ENCODE measurements at regions of chr15 and their contacts with region 1.

Region 1: DNA sequence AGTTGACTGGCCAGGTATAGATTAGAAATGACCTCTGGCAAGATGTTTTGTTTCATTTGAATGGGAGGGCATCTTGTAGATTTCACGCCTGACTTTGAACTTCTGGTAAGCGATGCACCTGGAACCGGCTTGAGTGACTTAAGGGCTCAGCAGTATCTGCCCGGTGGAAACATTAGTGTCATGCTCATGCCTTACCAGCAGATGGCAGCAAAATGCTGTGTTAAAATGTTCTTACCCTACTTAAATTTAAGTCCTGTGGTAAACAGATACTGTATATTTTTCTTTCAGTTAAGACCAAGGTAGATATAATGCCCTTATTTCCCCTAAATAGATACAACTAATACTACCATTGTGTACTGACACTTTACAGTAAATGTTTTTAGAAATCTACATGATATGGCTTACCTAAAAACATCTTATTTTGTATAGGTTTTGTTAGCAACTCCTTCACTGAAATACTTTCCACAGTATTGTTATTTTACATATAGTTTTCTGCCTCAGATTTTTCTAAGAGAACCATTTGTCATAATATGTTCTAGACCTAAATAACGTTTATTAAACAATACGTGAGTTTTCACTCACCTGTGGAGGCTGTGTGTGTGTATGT is 25.5 kb downstream of the ASB7 start:
- DNase-seq: peak; percentile 43
- ATAC-seq: peak; percentile 92
- H3K4me3 ChIP-seq: no peak overlapping the region
- H3K27ac ChIP-seq: no peak overlapping the region
- H3K4me1 ChIP-seq: no peaks in the 10 kb centered on the region
- H3K27me3 ChIP-seq: no peaks in the 10 kb centered on the region
- CTCF ChIP-seq: peak; percentile 73 to 86 (median 80); a peak in 5 of 6 replicates
- EP300 ChIP-seq: no peak
- POLR2A ChIP-seq: no peak
- RAD21 ChIP-seq: peak; percentile 73

Region 2: DNA sequence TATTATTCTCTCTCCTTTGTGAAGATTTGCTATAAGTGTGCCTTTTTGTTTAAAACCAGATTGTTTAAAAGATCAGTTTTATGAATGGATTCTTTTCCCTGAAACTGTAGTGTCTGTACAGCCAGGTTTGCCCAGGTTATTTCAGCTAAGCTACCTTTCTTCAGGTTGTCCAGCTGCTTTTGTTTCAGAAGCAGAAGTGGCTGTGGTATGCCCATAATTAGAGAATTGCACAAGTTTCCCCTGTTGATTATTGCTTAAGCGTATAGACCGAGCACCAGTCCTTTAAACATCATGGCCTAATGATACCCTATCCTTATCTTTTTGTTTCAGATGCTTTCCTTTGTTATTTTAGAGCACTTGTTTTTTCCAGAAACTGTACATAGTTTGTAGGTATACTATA is 15.4 kb before region 1 on chr15:
- CTCF ChIA-PET with region 1: interaction called, 11 read pairs
- POLR2A ChIA-PET with region 1: interaction called, 8 read pairs
- RAD21 ChIA-PET with region 1: no interaction called
- SMC1A ChIA-PET with region 1: interaction called, 4 read pairs
- in situ Hi-C with region 1: no loop called
- intact Hi-C with region 1: no loop called
- DNase-seq: no peak
- ATAC-seq: no peak
- H3K4me3 ChIP-seq: no peak overlapping the region
- H3K27ac ChIP-seq: no peak overlapping the region
- H3K4me1 ChIP-seq: no peaks in the 10 kb centered on the region
- H3K27me3 ChIP-seq: no peaks in the 10 kb centered on the region
- CTCF ChIP-seq: no peak
- EP300 ChIP-seq: no peak
- POLR2A ChIP-seq: no peak
- RAD21 ChIP-seq: no peak

Region 3: GRCh38 chr15:100771746-100772145 is 143.9 kb after region 1 on chr15:
- CTCF ChIA-PET with region 1: no interaction called
- POLR2A ChIA-PET with region 1: no interaction called
- RAD21 ChIA-PET with region 1: no interaction called
- SMC1A ChIA-PET with region 1: no interaction called
- in situ Hi-C with region 1: no loop called
- intact Hi-C with region 1: no loop called
- DNase-seq: no peak
- ATAC-seq: no peak
- H3K4me3 ChIP-seq: no peak overlapping the region
- H3K27ac ChIP-seq: no peak overlapping the region
- H3K4me1 ChIP-seq: no peaks in the 10 kb centered on the region
- H3K27me3 ChIP-seq: no peaks in the 10 kb centered on the region; a peak in 1 of 4 replicates
- CTCF ChIP-seq: no peak
- EP300 ChIP-seq: no peak
- POLR2A ChIP-seq: no peak
- RAD21 ChIP-seq: no peak

Region 4: GRCh38 chr15:100889385-100890050 is 261.6 kb after region 1 on chr15:
- CTCF ChIA-PET with region 1: no interaction called
- POLR2A ChIA-PET with region 1: no interaction called
- RAD21 ChIA-PET with region 1: no interaction called
- SMC1A ChIA-PET with region 1: no interaction called
- in situ Hi-C with region 1: no loop called
- intact Hi-C with region 1: no loop called
- DNase-seq: no peak
- ATAC-seq: no peak
- H3K4me3 ChIP-seq: no peak overlapping the region
- H3K27ac ChIP-seq: no peak overlapping the region
- H3K4me1 ChIP-seq: no peaks in the 10 kb centered on the region
- H3K27me3 ChIP-seq: peaks cover 15 to 16% of the 10 kb centered on the region in 2 experiments
- CTCF ChIP-seq: no peak
- EP300 ChIP-seq: no peak
- POLR2A ChIP-seq: no peak
- RAD21 ChIP-seq: no peak